Mammary epithelial cell (primary cell): ENCODE measurements at regions of chr1 and their contacts with region 1.

Region 1: GRCh38 chr1:91529856-91530255 is 29.2 kb downstream of the CDC7 start:
- DNase-seq: peak; percentile 54
- H3K4me3 ChIP-seq: no peak overlapping the region
- H3K27ac ChIP-seq: no peak overlapping the region
- H3K4me1 ChIP-seq: peaks cover 9% of the 10 kb centered on the region
- H3K27me3 ChIP-seq: no peaks in the 10 kb centered on the region
- CTCF ChIP-seq: peak; percentile 56 to 71

Region 2: DNA sequence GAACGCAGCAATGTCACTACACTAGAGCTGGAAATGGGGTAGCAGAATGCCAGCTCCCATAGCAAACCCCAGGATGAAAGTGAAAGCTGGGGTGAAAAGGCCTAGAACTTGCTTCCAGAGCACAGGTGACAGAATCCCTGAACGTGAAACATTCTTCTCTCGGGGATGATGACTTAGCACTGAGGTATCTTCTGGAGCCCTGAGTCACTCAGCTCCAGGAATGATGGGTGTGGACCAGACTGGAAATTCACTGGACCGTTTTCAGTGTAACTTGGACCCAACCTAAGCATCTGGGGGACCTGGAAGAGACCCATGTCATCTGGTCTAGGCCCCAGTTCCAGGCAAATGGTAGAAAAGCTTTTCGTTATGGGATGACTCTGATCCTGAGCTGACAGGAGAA is 79.7 kb after region 1 on chr1:
- CTCF ChIA-PET with region 1: no interaction called
- dilution Hi-C with region 1: no loop called
- in situ Hi-C with region 1: no loop called
- intact Hi-C with region 1: loop called (anchors 2 kb)
- DNase-seq: peak; percentile 68
- H3K4me3 ChIP-seq: no peak overlapping the region
- H3K27ac ChIP-seq: peak overlapping the region; percentile 43
- H3K4me1 ChIP-seq: peaks cover 12% of the 10 kb centered on the region
- H3K27me3 ChIP-seq: no peaks in the 10 kb centered on the region
- CTCF ChIP-seq: no peak

Region 3: GRCh38 chr1:91795591-91796389 is 265.9 kb after region 1 on chr1:
- CTCF ChIA-PET with region 1: no interaction called
- dilution Hi-C with region 1: no loop called
- in situ Hi-C with region 1: no loop called
- intact Hi-C with region 1: loop called (anchors 5 kb)
- DNase-seq: peak; percentile 14
- H3K4me3 ChIP-seq: no peak overlapping the region
- H3K27ac ChIP-seq: no peak overlapping the region
- H3K4me1 ChIP-seq: no peaks in the 10 kb centered on the region
- H3K27me3 ChIP-seq: peaks cover 46% of the 10 kb centered on the region
- CTCF ChIP-seq: no peak